PC-9 (cell line): ENCODE measurements at regions of chr17 and their contacts with region 1.

Region 1: DNA sequence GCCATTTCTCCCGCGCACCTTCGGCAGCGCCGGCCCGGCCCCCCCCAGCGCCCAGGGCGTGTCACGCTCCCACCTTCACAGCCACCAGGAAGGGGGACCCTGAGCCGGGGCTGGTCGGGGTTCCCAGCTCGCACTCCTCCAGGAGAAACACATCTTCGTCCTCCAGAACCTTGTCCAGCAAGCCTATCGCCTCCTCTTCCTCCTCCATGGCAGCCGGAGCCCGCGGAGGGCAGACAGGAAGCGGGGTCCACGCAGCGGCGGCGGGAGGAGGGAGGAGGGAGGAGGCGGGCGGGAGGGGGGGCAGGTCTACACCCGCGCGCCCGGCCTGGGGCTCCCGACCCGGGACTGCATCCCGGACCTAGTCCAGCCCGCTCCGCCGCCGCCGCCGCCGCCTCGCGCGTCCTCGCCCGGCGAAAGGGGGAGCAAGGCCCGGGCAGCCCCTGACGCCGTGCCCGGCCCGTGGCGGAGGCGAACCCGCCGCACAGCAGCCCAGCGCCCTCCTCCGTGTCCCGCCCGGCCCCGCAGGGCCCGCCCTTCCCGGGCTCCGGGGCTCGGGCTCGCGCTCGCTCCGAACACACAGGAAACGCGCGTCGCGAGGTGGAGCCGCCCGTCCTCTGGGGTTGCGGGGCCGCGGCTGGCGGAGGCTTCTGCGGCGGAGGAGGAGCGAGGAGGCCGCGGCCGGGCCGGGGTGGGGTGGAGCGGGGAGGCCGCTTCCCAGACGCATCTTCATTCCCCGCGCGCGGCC is 70.7 kb downstream of the ABR start:
- DNase-seq: peak in 1 of 2 experiments; percentile 49
- H3K4me3 ChIP-seq: peak overlapping the region; percentile 89
- H3K27ac ChIP-seq: peak overlapping the region; percentile 97
- H3K4me1 ChIP-seq: peaks cover 46% of the 10 kb centered on the region
- H3K27me3 ChIP-seq: no peaks in the 10 kb centered on the region
- CTCF ChIP-seq: no peak

Region 2: GRCh38 chr17:1087381-1088241 is 21.4 kb before region 1 on chr17:
- CTCF ChIA-PET with region 1: no interaction called
- POLR2A ChIA-PET with region 1: no interaction called
- intact Hi-C with region 1: loop called (anchors 1 kb)
- DNase-seq: peak; percentile 93 to 94
- H3K4me3 ChIP-seq: peak overlapping the region; percentile 48; the same call in 1 of the 2 replicates
- H3K27ac ChIP-seq: peak overlapping the region; percentile 88
- H3K4me1 ChIP-seq: peaks cover 42% of the 10 kb centered on the region
- H3K27me3 ChIP-seq: no peaks in the 10 kb centered on the region
- CTCF ChIP-seq: no peak

Region 3: DNA sequence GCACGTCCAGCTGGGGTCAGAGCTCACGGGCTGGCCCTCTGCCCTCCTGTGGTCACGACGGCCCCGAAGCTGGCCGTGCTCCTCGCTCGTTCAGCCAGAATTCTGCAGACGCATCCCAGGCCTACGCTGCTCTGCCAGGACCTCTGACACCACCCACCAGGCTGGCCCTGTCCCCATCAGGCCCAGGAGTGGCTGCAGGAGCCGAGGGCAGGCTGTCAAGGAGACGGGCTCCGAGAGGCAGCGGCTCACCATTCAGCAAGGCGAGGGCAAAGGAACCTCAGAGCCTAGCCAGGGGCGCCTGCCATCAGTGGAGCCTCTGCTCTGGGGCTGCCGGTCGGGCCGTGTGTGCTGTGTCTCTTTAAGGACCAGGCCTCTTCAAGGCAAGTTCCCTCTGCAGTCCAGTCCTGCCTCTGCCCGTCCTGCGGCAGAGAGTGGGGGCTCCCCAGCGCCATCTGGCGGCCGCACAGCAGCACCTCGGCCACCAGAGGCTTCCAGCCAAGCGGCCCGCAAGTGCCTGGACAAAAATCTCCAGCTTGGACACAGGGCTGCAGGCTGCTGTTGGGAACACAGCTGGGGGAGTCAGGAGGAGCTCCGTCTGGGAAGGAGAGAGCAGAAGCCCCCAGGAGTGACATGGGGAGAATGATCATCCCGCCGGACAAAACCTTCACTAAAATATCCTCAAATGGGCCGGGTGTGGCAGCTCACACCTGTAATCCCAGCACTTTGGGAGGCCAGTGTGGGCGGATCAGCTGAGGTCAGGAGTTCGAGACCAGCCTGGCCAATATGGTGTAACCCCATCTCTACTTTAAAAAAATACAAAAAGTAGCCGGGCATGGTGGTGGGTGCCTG is 78.1 kb after region 1 on chr17:
- CTCF ChIA-PET with region 1: interaction called, 4 read pairs
- POLR2A ChIA-PET with region 1: no interaction called
- intact Hi-C with region 1: loop called (anchors 2 kb)
- DNase-seq: peak; percentile 63 to 87
- H3K4me3 ChIP-seq: no peak overlapping the region
- H3K27ac ChIP-seq: no peak overlapping the region
- H3K4me1 ChIP-seq: no peaks in the 10 kb centered on the region
- H3K27me3 ChIP-seq: peaks cover 14% of the 10 kb centered on the region; the same call in 1 of the 2 replicates
- CTCF ChIP-seq: peak; percentile 98

Region 4: GRCh38 chr17:1365445-1366039 is 256.5 kb after region 1 on chr17:
- CTCF ChIA-PET with region 1: no interaction called
- POLR2A ChIA-PET with region 1: no interaction called
- intact Hi-C with region 1: no loop called
- DNase-seq: peak; percentile 56 to 74
- H3K4me3 ChIP-seq: no peak overlapping the region
- H3K27ac ChIP-seq: peak overlapping the region; percentile 47; the same call in 1 of the 2 replicates
- H3K4me1 ChIP-seq: peaks cover 40% of the 10 kb centered on the region
- H3K27me3 ChIP-seq: no peaks in the 10 kb centered on the region
- CTCF ChIP-seq: peak; percentile 97